H1 (cell line): ENCODE measurements at regions of chr5 and their contacts with region 1.

Region 1: DNA sequence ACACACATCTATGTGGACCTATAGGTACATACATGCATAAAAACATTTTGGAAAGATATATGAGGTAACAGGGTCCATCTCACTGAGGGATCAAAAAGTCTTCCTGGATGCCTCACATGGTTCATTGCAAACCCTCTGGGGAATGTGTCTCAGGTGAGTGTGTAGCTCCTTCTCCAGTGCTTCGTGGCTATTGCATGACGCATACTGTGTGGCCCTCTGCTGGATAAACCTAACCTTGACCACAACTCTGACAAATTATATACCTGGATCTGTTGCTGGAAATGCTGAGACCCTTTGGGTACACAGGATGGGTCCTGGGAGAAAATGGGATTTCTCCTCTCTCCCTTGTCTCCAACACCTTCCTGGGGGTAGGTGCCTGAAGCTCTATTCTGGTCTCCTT is 91.9 kb downstream of the JAKMIP2 start:
- DNase-seq: no peak
- H3K4me3 ChIP-seq: no peak overlapping the region
- H3K27ac ChIP-seq: no peak overlapping the region
- H3K4me1 ChIP-seq: peaks cover 0 to 4% (median 0%) of the 10 kb centered on the region in 4 experiments; a peak in 1 of 7 replicates
- H3K27me3 ChIP-seq: no peaks in the 10 kb centered on the region
- CTCF ChIP-seq: peak; percentile 10 to 58 (median 57)
- EP300 ChIP-seq: no peak
- POLR2A ChIP-seq: no peak
- RAD21 ChIP-seq: peak; percentile 54 to 74

Region 2: DNA sequence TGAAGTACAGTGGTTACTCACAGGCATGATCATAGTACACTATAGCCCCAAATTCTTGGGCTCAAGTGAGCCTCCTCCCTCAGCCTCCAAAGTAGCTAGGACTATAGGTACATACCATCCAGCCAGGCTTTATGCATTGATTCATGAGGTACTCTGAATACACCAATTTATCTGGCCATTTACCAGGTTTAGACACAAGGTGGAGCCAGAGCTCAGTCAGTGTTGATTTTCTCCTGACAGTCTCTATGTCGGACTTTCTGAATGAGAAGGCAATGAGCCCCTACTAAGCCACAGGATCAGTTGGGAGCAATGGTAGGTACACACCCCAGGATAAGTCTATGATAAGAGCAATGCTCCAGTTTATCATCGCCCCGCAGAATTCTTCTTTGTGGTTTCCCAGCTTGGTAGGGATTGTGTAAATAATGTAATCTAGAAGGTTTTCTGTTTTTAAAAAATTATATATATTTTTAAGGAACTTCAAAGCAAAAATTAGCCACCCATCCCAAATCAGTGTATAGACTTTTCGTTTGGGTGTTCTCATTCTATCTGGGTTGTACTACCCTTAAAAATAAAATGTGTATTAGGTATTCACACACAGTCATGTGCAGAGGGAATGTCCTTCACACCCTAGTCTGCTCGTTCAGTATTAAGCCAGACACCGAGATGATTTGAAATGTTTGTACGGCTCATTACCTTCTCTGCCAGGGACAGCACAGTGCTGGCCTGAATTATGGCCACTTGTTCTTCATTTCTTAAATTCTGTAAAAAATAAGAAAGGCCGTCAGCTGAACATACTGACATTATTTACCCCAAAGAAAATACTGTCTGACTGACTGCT is 62.3 kb before region 1 on chr5:
- CTCF ChIA-PET with region 1: interaction called, 12 read pairs
- POLR2A ChIA-PET with region 1: no interaction called
- DNase-seq: peak; percentile 25 to 82
- H3K4me3 ChIP-seq: no peak overlapping the region
- H3K27ac ChIP-seq: no peak overlapping the region
- H3K4me1 ChIP-seq: no peaks in the 10 kb centered on the region; a peak in 1 of 7 replicates
- H3K27me3 ChIP-seq: no peaks in the 10 kb centered on the region
- CTCF ChIP-seq: peak in 2 of 3 experiments; percentile 77 to 88; a peak in 3 of 4 replicates
- EP300 ChIP-seq: no peak
- POLR2A ChIP-seq: no peak
- RAD21 ChIP-seq: peak; percentile 86 to 93

Region 3: GRCh38 chr5:147740864-147741263 is 50.3 kb after region 1 on chr5:
- CTCF ChIA-PET with region 1: interaction called, 13 read pairs
- POLR2A ChIA-PET with region 1: no interaction called
- DNase-seq: no peak
- H3K4me3 ChIP-seq: no peak overlapping the region
- H3K27ac ChIP-seq: no peak overlapping the region
- H3K4me1 ChIP-seq: no peaks in the 10 kb centered on the region
- H3K27me3 ChIP-seq: no peaks in the 10 kb centered on the region
- CTCF ChIP-seq: peak in 1 of 3 experiments; percentile 17; a peak in 1 of 4 replicates
- EP300 ChIP-seq: no peak
- POLR2A ChIP-seq: no peak
- RAD21 ChIP-seq: no peak